IMR-90 (cell line): ENCODE measurements at regions of chr3 and their contacts with region 1.

Region 1: GRCh38 chr3:16441371-16441875 is 72.1 kb downstream of the RFTN1 start:
- DNase-seq: peak; percentile 68
- ATAC-seq: peak; percentile 79
- H3K4me3 ChIP-seq: no peak overlapping the region
- H3K27ac ChIP-seq: peak overlapping the region; percentile 65; the same call in 1 of the 2 replicates
- H3K4me1 ChIP-seq: peaks cover 14% of the 10 kb centered on the region
- H3K27me3 ChIP-seq: no peaks in the 10 kb centered on the region
- CTCF ChIP-seq: no peak
- POLR2A ChIP-seq: no peak
- RAD21 ChIP-seq: no peak

Region 2: DNA sequence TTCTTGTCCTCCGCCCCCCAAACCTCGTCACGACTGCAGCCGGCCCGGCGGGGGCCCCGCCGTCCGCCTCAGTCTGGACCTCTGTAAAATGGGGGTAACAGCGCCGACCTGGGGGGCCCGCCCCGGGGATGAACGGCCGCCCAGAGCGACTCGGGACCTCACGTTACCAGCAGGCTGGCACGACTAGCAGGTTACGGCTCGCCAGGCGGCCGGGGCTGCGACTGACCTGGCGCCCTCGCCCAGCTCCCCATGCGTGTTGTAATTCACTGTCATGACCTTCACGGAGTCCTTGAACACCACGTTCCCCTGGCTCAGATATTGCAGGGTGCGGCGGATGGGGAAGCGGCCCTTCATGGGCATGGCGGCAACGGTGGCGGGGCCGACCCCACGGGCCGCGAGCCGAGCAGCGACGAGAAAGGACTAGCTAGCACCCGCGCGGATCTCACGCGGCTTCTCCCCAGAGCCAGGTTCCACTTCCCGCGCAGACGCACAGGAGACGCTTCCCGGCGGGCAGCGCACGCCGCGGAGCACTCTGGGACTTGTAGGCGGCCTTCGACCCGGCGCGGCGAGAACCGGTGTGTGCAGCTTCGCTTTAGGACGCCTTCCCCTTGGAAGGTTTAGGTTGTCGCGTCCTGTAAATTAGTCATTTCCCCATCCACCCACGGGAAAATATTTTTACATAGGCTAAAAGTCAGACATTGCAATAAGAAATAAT is 1376.4 kb before region 1 on chr3 and contains the start of gene MRPS25:
- CTCF ChIA-PET with region 1: no interaction called
- POLR2A ChIA-PET with region 1: no interaction called
- dilution Hi-C with region 1: no loop called
- in situ Hi-C with region 1: no loop called
- intact Hi-C with region 1: no loop called
- DNase-seq: peak; percentile 92
- ATAC-seq: peak; percentile 97
- H3K4me3 ChIP-seq: peak within 1 kb of the TSS; percentile 93
- H3K27ac ChIP-seq: peak within 1 kb of the TSS; percentile 92
- H3K4me1 ChIP-seq: peaks cover 9% of the 10 kb centered on the region
- H3K27me3 ChIP-seq: no peaks in the 10 kb centered on the region
- CTCF ChIP-seq: no peak
- POLR2A ChIP-seq: peak; percentile 78
- RAD21 ChIP-seq: no peak
- total RNA-seq, gene MRPS25: 9.0 and 9.7 TPM in 2 replicates

Region 3: DNA sequence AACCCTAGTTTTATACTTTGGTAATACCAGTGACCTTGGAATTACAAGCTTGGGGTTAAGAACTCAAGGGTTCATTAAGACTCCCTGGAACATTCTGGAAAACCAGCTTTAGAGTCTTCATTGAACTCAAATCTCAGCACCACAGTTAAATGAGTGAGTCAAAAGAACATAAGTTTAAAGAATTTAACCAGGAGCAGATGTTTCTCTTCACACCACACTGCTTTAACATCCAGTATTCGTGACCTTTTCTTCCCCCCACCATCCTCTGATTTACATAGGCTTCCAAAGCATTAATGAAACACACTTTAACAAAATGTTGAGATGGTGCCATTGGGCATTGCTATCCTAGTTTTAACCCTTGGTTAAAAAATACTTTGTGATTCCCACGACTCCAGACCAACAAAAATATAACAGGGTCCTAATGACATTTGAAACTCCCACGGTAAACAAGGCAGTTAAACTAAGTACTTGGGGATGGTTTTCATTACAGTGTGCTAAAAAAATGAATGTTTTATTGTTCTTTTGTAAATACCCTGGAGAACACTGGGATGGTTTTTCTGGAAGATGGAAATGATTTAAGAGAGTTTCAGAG is 52.5 kb before region 1 on chr3:
- CTCF ChIA-PET with region 1: interaction called, 3 read pairs
- POLR2A ChIA-PET with region 1: no interaction called
- dilution Hi-C with region 1: no loop called
- in situ Hi-C with region 1: no loop called
- intact Hi-C with region 1: loop called (anchors 2 kb)
- DNase-seq: peak; percentile 78
- ATAC-seq: peak; percentile 59
- H3K4me3 ChIP-seq: no peak overlapping the region
- H3K27ac ChIP-seq: peak overlapping the region; percentile 48; the same call in 1 of the 2 replicates
- H3K4me1 ChIP-seq: peaks cover 38% of the 10 kb centered on the region
- H3K27me3 ChIP-seq: no peaks in the 10 kb centered on the region
- CTCF ChIP-seq: no peak
- POLR2A ChIP-seq: no peak
- RAD21 ChIP-seq: no peak